CD4-positive, alpha-beta T cell (primary cell): ENCODE measurements at regions of chr6 and their contacts with region 1.

Region 1: GRCh38 chr6:30259140-30260035 is 46.2 kb upstream of the TRIM26 start:
- DNase-seq: peak; percentile 36 to 92 (median 50)
- ATAC-seq: peak; percentile 81
- H3K4me3 ChIP-seq: peak overlapping the region; percentile 84
- H3K4me3 Mint-ChIP-seq: peak overlapping the region; percentile 96
- H3K27ac ChIP-seq: peak overlapping the region; percentile 41
- H3K27ac Mint-ChIP-seq: peak overlapping the region; percentile 85
- H3K4me1 ChIP-seq: peaks cover 16% of the 10 kb centered on the region
- H3K4me1 Mint-ChIP-seq: peaks cover 9% of the 10 kb centered on the region
- H3K27me3 ChIP-seq: no peaks in the 10 kb centered on the region
- H3K27me3 Mint-ChIP-seq: no peaks in the 10 kb centered on the region
- CTCF ChIP-seq: peak; percentile 38

Region 2: DNA sequence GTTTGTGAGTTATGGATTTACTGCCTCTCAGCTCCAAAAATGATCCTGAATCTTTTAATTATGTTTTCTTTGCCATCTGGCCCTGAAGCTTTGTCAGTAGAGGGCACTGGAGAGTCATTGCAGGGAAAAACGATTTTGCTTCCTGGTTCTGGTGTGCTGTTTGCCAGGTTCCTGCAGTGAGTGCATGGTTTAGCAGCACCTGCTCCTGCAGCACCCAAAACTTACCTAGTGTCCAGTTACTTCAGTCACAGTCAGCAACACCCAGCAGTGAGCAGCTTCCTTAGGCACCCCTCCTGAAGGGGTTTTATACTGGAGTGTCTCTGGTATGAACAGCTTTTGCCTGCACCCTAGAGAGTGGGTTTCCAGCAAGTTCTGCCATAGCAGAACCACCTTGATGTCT is 40.1 kb before region 1 on chr6:
- CTCF ChIA-PET with region 1: no interaction called
- POLR2A ChIA-PET with region 1: interaction called, 11 read pairs
- intact Hi-C with region 1: loop called (anchors 2 kb)
- DNase-seq: peak in 13 of 14 experiments; percentile 29 to 78 (median 38)
- ATAC-seq: peak; percentile 73
- H3K4me3 ChIP-seq: no peak overlapping the region
- H3K4me3 Mint-ChIP-seq: no peak overlapping the region
- H3K27ac ChIP-seq: no peak overlapping the region
- H3K27ac Mint-ChIP-seq: peak overlapping the region; percentile 18
- H3K4me1 ChIP-seq: peaks cover 8% of the 10 kb centered on the region
- H3K4me1 Mint-ChIP-seq: peaks cover 18% of the 10 kb centered on the region
- H3K27me3 ChIP-seq: no peaks in the 10 kb centered on the region
- H3K27me3 Mint-ChIP-seq: no peaks in the 10 kb centered on the region
- CTCF ChIP-seq: peak; percentile 91

Region 3: DNA sequence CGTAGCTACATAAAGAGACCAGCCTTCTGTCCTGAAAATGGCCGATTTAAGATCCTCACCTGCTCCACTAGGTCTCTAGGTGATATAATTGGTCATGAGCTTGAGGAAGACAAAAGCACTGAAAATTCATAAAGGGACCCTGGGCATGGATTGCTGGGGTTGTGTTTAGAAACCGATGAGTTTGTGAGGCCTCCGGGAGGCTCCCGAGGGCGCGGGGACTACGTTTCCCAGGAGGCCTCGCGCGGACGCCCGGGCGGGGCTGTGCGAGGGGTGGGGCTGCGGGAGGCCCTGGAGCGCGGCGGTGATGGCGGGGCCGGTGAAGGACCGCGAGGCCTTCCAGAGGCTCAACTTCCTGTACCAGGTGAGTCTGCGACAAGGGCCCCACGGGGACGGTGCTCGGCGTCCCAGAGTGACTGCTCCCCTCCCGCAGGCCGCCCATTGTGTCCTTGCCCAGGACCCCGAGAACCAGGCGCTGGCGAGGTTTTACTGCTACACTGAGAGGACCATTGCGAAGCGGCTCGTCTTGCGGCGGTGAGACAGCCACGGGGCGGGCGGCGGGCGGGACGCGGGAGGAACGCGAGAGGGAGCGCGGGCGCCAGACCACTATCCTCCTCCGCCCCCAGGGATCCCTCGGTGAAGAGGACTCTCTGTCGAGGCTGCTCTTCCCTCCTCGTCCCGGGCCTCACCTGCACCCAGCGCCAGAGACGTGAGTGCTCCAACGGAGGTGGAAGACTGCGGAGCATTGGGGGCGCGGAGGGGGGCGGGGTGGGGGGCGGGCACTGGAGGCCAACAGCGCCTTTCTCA is 85.7 kb after region 1 on chr6 and contains the start of gene RPP21:
- CTCF ChIA-PET with region 1: no interaction called
- POLR2A ChIA-PET with region 1: no interaction called
- intact Hi-C with region 1: loop called in 1 of 2 experiments (anchors 5 kb)
- DNase-seq: peak; percentile 74 to 92 (median 85)
- ATAC-seq: peak; percentile 99
- H3K4me3 ChIP-seq: peak within 1 kb of the TSS; percentile 91
- H3K4me3 Mint-ChIP-seq: peak within 1 kb of the TSS; percentile 96
- H3K27ac ChIP-seq: peak within 1 kb of the TSS; percentile 88 to 90
- H3K27ac Mint-ChIP-seq: peak within 1 kb of the TSS; percentile 90
- H3K4me1 ChIP-seq: peaks cover 22% of the 10 kb centered on the region
- H3K4me1 Mint-ChIP-seq: peaks cover 26% of the 10 kb centered on the region
- H3K27me3 ChIP-seq: no peaks in the 10 kb centered on the region
- H3K27me3 Mint-ChIP-seq: no peaks in the 10 kb centered on the region
- CTCF ChIP-seq: no peak
- total RNA-seq, gene RPP21: 42.8 to 51.9 TPM